Esophagus squamous epithelium (tissue), 5 donors: ENCODE measurements at regions of chr1 and their contacts with region 1.

Region 1: DNA sequence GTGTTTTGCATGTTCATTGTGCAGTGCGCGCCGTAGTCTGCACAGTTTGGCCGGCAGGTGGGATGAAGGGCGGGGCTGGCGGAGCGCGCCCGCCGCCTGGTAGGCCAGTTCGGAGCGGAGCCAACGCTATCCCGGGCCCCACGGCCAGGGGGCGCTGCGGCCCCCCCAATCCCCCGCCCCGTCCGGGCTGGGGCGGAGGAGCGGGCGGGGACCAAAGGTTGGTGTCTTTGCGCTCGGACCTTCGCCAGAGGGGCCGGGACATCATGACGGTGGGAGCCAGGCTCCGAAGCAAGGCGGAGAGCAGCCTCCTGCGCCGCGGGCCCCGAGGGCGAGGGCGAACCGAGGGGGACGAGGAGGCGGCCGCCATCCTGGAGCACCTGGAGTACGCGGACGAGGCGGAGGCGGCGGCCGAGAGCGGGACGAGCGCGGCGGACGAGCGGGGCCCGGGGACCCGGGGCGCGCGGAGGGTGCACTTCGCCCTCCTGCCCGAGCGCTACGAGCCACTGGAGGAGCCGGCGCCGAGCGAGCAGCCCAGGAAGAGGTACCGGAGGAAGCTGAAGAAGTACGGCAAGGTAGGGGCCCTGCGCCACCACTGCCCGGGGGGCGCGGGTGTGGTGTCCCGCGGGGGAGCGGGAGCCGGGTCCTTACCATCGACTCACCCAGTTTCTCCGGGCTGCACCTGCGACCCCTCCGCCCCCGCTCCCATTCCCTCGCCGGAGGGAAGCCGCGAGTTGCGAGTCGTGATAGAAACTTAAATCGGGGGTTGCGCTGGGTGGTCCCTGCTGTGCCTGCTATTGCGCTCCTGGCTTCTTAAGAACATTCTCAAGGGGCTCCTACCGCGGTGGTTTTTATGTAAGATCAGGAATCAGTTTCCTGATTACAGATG is at the start of gene C1orf115:
- DNase-seq: no peak
- H3K4me3 ChIP-seq: peak within 1 kb of the TSS; percentile 56 to 80 (median 74)
- H3K27ac ChIP-seq: peak within 1 kb of the TSS; percentile 21 to 77 (median 60)
- H3K4me1 ChIP-seq: peaks cover 4 to 21% (median 5%) of the 10 kb centered on the region in 3 donors
- H3K27me3 ChIP-seq: peaks cover 0 to 22% (median 0%) of the 10 kb centered on the region in 4 donors
- CTCF ChIP-seq: peak; percentile 87 to 96 (median 94)
- POLR2A ChIP-seq: peak in 2 of 4 donors; percentile 15 to 43
- total RNA-seq, gene C1orf115: 1.1 to 7.8 (median 4.2) TPM

Region 2: GRCh38 chr1:220733090-220733601 is 42.8 kb after region 1 on chr1:
- intact Hi-C with region 1: loop called (anchors 5 kb)
- DNase-seq: peak; percentile 13
- H3K4me3 ChIP-seq: peak overlapping the region in 3 of 4 donors; percentile 23 to 60 (median 30)
- H3K27ac ChIP-seq: peak overlapping the region in 3 of 4 donors; percentile 46 to 83 (median 71)
- H3K4me1 ChIP-seq: peaks cover 4 to 15% (median 4%) of the 10 kb centered on the region in 3 donors
- H3K27me3 ChIP-seq: no peaks in the 10 kb centered on the region
- CTCF ChIP-seq: peak; percentile 84 to 92 (median 90)
- POLR2A ChIP-seq: no peak

Region 3: GRCh38 chr1:220776720-220777326 is 86.4 kb after region 1 on chr1:
- intact Hi-C with region 1: loop called (anchors 10 kb)
- DNase-seq: no peak
- H3K4me3 ChIP-seq: no peak overlapping the region
- H3K27ac ChIP-seq: no peak overlapping the region
- H3K4me1 ChIP-seq: no peaks in the 10 kb centered on the region
- H3K27me3 ChIP-seq: no peaks in the 10 kb centered on the region
- CTCF ChIP-seq: peak; percentile 66 to 90 (median 84)
- POLR2A ChIP-seq: no peak